Ovary (tissue), 10 donors: ENCODE measurements at regions of chr12 and their contacts with region 1.

Region 1: GRCh38 chr12:56021889-56022497 is 1.1 kb downstream of the IKZF4 start:
- DNase-seq: no peak
- H3K4me3 ChIP-seq: peak overlapping the region; percentile 20
- H3K27ac ChIP-seq: peak overlapping the region; percentile 33 to 79
- H3K4me1 ChIP-seq: peaks cover 9% of the 10 kb centered on the region
- H3K27me3 ChIP-seq: no peaks in the 10 kb centered on the region
- CTCF ChIP-seq: no peak
- EP300 ChIP-seq: no peak
- POLR2A ChIP-seq: no peak

Region 2: GRCh38 chr12:56084958-56085543 is 63.1 kb after region 1 on chr12:
- intact Hi-C with region 1: loop called in 1 of 4 experiments (anchors 2 kb)
- DNase-seq: no peak
- H3K4me3 ChIP-seq: no peak overlapping the region
- H3K27ac ChIP-seq: no peak overlapping the region
- H3K4me1 ChIP-seq: peaks cover 2% of the 10 kb centered on the region
- H3K27me3 ChIP-seq: no peaks in the 10 kb centered on the region
- CTCF ChIP-seq: no peak
- EP300 ChIP-seq: no peak
- POLR2A ChIP-seq: no peak